ENCODE measurements at regions of chr3 and their contacts with region 1.

Region 1: DNA sequence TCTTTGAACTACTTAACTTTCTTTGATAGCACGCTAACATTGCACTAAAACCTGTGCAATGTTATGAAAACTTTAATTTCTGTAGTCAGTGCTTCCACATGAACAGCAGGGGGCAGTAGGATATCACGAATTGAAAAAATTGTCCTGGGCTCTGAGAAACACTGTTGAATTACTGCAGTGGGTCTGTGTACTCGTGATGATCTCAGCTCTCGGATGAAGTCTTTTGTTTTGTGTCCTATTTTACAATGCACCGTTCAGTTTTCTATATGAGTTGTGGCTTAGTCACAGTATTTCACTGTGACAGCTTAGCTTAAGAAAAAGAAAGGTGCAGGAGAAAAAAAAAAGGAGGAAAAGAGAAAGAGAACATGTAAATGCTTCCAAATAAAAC is 141.3 kb upstream of the CCDC54 start:
- DNase-seq: peak; percentile 86
- H3K4me3 ChIP-seq: peak overlapping the region; percentile 37 to 69 (median 57)
- H3K27ac ChIP-seq: peak overlapping the region; percentile 77
- H3K4me1 ChIP-seq: peaks cover 17% of the 10 kb centered on the region
- H3K27me3 ChIP-seq: no peaks in the 10 kb centered on the region
- CTCF ChIP-seq: peak; percentile 81 to 86

Region 2: GRCh38 chr3:107206141-107206540 is 29.8 kb before region 1 on chr3:
- CTCF ChIA-PET with region 1: interaction called, 6 read pairs
- dilution Hi-C with region 1: no loop called
- in situ Hi-C with region 1: no loop called
- intact Hi-C with region 1: loop called (anchors 1 kb)
- DNase-seq: peak; percentile 58
- H3K4me3 ChIP-seq: no peak overlapping the region
- H3K27ac ChIP-seq: no peak overlapping the region
- H3K4me1 ChIP-seq: peaks cover 24% of the 10 kb centered on the region
- H3K27me3 ChIP-seq: no peaks in the 10 kb centered on the region
- CTCF ChIP-seq: peak; percentile 70 to 76

Region 3: GRCh38 chr3:107421170-107421792 is 185.4 kb after region 1 on chr3:
- CTCF ChIA-PET with region 1: interaction called, 7 read pairs
- dilution Hi-C with region 1: no loop called
- in situ Hi-C with region 1: no loop called
- intact Hi-C with region 1: loop called (anchors 1 kb)
- DNase-seq: peak; percentile 66
- H3K4me3 ChIP-seq: peak overlapping the region in 2 of 3 experiments; percentile 22 to 31
- H3K27ac ChIP-seq: no peak overlapping the region
- H3K4me1 ChIP-seq: peaks cover 5% of the 10 kb centered on the region
- H3K27me3 ChIP-seq: no peaks in the 10 kb centered on the region
- CTCF ChIP-seq: peak; percentile 56 to 70

Region 4: DNA sequence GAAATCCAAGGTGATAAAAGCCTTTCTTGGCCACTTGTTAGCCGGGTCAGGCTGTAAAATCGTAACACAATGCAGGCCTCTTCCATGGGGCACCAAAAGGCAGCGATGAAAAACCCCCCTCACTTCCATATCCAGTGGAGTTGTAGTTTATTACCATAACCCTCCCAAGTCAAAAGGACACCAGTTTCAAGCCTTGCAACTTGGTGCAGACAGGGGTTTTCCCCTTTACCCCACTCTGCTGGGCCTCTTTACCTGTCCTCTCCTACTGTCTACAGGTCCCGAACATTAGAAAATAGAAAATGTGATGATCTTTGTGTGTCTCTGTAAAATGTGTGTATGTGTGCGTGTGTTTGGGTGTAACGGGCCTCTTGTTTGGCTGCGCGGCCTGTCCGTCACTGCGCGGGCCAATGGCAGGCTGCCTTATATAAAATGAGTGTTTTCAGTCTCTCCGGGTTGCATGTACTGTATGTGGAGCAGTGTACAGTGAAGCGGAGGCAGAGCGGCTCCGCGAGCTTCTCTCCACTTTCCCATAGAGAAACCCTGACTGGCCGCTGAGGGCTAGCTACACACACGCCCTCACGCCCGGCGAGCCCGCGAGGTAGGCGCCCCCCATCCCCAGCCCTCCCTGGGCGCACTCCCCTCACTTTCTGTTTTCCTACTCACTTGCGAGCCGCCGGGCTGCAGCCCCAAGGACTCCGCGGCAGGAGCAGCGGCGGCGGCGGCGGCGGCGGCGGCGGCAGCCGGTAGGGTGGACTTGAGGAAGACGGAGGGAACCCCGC is 286.8 kb after region 1 on chr3 and contains the start of gene BBX:
- CTCF ChIA-PET with region 1: no interaction called
- dilution Hi-C with region 1: no loop called
- in situ Hi-C with region 1: no loop called
- intact Hi-C with region 1: loop called (anchors 2 kb)
- DNase-seq: peak; percentile 98
- H3K4me3 ChIP-seq: peak within 1 kb of the TSS; percentile 78 to 91 (median 80)
- H3K27ac ChIP-seq: peak within 1 kb of the TSS; percentile 84
- H3K4me1 ChIP-seq: peaks cover 17% of the 10 kb centered on the region
- H3K27me3 ChIP-seq: no peaks in the 10 kb centered on the region
- CTCF ChIP-seq: no peak
- total RNA-seq, gene BBX: 62.9 to 89.2 TPM

Region 5: DNA sequence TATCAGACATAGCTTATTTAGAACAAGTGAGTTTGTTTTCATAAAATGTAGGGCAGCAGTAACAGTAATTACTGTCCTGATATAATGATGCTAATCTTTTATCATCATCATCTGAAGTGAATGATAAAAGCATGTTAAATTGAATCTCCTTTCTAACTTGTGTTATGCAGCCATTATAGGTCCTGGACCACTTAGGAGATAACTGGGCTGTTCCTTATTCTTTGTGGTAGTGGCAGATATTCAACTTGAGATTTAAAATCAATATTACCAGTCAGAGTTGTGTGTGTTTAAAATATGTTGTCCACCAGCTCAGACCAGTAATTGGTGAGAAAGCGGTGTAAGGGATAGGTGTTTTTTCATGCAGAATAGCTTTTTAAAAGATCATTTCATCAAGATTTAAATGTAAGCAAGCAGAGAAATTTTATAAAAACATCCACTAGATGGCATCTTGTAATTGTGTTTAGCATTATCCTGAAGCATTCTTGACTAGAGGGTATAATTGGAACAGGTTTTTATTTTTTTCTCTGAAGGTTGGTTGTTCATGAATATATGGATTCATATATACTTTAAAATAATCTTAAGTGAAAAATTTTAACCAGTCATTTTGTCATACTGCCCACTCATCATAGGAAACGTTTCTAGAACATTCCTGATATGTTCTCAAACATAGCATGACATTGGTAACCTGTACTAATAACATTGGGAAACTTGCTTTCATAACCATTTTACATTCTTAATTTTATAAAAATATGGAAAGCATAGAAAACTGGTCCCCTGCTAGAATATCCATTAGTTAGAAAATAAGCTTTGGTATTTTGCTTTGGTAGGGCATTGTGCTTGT is 440.8 kb after region 1 on chr3:
- CTCF ChIA-PET with region 1: no interaction called
- dilution Hi-C with region 1: no loop called
- in situ Hi-C with region 1: no loop called
- intact Hi-C with region 1: loop called (anchors 10 kb)
- DNase-seq: no peak
- H3K4me3 ChIP-seq: no peak overlapping the region
- H3K27ac ChIP-seq: no peak overlapping the region
- H3K4me1 ChIP-seq: no peaks in the 10 kb centered on the region
- H3K27me3 ChIP-seq: no peaks in the 10 kb centered on the region
- CTCF ChIP-seq: peak; percentile 46 to 52

Region 6: GRCh38 chr3:107846279-107846852 is 610.4 kb after region 1 on chr3:
- CTCF ChIA-PET with region 1: no interaction called
- dilution Hi-C with region 1: no loop called
- in situ Hi-C with region 1: no loop called
- intact Hi-C with region 1: loop called (anchors 1 kb)
- DNase-seq: peak; percentile 25
- H3K4me3 ChIP-seq: no peak overlapping the region
- H3K27ac ChIP-seq: no peak overlapping the region
- H3K4me1 ChIP-seq: no peaks in the 10 kb centered on the region
- H3K27me3 ChIP-seq: no peaks in the 10 kb centered on the region
- CTCF ChIP-seq: peak; percentile 56 to 71

Region 7: DNA sequence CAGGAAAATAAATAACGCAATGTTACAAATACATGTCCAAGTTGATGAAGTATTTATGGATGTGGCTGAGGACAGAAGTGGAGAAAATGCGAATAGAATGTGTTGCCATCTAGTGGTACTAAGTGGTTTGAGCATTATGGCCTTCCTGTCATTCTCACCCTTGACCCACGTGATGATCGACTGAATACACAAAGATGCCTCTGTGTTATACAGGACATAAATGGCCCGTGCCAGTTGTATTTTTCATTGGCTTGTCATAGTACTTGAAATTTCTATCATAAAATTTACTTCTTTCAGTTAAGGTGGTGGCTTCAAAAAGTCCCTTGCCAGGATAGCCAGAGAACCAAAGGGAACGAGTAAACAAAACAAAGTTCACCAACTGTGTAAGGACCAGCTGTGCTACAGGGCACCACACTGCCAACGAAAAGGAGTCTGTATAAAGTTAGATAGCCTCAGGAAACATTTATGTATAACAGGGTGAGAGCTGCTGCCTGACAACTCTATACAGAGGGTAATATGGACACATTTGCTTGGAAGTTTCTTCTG is 1170.8 kb after region 1 on chr3:
- CTCF ChIA-PET with region 1: no interaction called
- dilution Hi-C with region 1: no loop called
- in situ Hi-C with region 1: no loop called
- intact Hi-C with region 1: loop called (anchors 5 kb)
- DNase-seq: peak; percentile 64
- H3K4me3 ChIP-seq: no peak overlapping the region
- H3K27ac ChIP-seq: no peak overlapping the region
- H3K4me1 ChIP-seq: no peaks in the 10 kb centered on the region
- H3K27me3 ChIP-seq: no peaks in the 10 kb centered on the region
- CTCF ChIP-seq: peak; percentile 86